Panc1 (cell line): ENCODE measurements at regions of chr15 and their contacts with region 1.

Region 1: GRCh38 chr15:56445746-56446145 is 19.2 kb downstream of the MNS1 start:
- DNase-seq: no peak
- ATAC-seq: no peak
- H3K4me3 ChIP-seq: no peak overlapping the region
- H3K27ac ChIP-seq: no peak overlapping the region
- H3K4me1 ChIP-seq: no peaks in the 10 kb centered on the region
- H3K27me3 ChIP-seq: no peaks in the 10 kb centered on the region
- CTCF ChIP-seq: no peak

Region 2: GRCh38 chr15:56272454-56272853 is 173.3 kb before region 1 on chr15:
- CTCF ChIA-PET with region 1: no interaction called
- POLR2A ChIA-PET with region 1: no interaction called
- in situ Hi-C with region 1: no loop called
- intact Hi-C with region 1: no loop called
- DNase-seq: no peak
- ATAC-seq: no peak
- H3K4me3 ChIP-seq: no peak overlapping the region
- H3K27ac ChIP-seq: no peak overlapping the region
- H3K4me1 ChIP-seq: no peaks in the 10 kb centered on the region
- H3K27me3 ChIP-seq: no peaks in the 10 kb centered on the region
- CTCF ChIP-seq: no peak

Region 3: GRCh38 chr15:56385908-56386307 is 59.8 kb before region 1 on chr15:
- CTCF ChIA-PET with region 1: no interaction called
- POLR2A ChIA-PET with region 1: interaction called, 10 read pairs
- in situ Hi-C with region 1: no loop called
- intact Hi-C with region 1: no loop called
- DNase-seq: no peak
- ATAC-seq: no peak
- H3K4me3 ChIP-seq: no peak overlapping the region
- H3K27ac ChIP-seq: no peak overlapping the region
- H3K4me1 ChIP-seq: no peaks in the 10 kb centered on the region
- H3K27me3 ChIP-seq: no peaks in the 10 kb centered on the region
- CTCF ChIP-seq: no peak

Region 4: DNA sequence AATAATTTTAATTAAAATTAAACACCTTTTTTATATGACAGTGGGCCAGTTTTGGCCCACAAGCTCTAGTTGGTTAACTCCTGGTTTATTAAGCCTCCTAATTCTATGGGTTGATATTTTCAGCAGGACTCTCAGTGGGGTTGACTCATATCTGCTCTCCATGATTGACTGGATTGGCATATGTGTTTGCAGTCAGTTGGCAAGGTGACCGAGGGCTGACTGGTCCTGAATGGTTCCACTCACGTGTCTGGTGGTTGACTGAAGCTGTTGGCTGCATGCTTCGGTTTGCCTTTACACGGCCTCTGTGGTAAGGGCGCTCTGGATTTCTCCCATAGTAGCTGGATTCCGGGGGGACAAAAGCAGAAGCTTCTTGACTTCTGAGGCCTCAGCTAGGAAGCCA is 352.9 kb after region 1 on chr15:
- CTCF ChIA-PET with region 1: no interaction called
- POLR2A ChIA-PET with region 1: no interaction called
- in situ Hi-C with region 1: no loop called
- intact Hi-C with region 1: no loop called
- DNase-seq: no peak
- ATAC-seq: no peak
- H3K4me3 ChIP-seq: no peak overlapping the region
- H3K27ac ChIP-seq: no peak overlapping the region
- H3K4me1 ChIP-seq: no peaks in the 10 kb centered on the region
- H3K27me3 ChIP-seq: peaks cover 3% of the 10 kb centered on the region; the same call in 1 of the 2 replicates
- CTCF ChIP-seq: no peak